Left ventricle myocardium superior (tissue), 1 donor: ENCODE measurements at regions of chr1 and their contacts with region 1.

Region 1: GRCh38 chr1:51044834-51045233 is 57.2 kb upstream of the C1orf185 start:
- DNase-seq: no peak
- ATAC-seq: no peak

Region 2: DNA sequence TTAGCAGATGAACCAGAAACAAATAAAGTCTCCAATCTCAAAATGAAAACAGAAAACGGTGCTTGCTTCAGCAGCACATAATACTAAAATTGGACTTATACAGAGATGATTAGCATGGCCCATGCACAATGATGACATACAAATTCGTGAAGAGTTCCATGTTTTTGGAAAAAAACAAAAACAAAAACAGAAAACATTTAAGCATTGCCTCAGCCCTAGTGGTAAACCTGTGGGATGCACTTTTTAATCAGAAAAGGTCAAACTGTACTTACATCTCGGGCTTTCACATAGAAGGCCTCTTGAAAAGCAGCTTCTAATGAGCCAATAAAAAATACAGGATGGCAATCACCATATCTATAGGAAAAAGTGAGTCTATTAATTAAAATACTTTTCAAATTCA is 462.5 kb before region 1 on chr1:
- intact Hi-C with region 1: no loop called
- DNase-seq: no peak
- ATAC-seq: no peak

Region 3: GRCh38 chr1:50774759-50775351 is 270.0 kb before region 1 on chr1:
- intact Hi-C with region 1: loop called (anchors 10 kb)
- DNase-seq: no peak
- ATAC-seq: no peak

Region 4: DNA sequence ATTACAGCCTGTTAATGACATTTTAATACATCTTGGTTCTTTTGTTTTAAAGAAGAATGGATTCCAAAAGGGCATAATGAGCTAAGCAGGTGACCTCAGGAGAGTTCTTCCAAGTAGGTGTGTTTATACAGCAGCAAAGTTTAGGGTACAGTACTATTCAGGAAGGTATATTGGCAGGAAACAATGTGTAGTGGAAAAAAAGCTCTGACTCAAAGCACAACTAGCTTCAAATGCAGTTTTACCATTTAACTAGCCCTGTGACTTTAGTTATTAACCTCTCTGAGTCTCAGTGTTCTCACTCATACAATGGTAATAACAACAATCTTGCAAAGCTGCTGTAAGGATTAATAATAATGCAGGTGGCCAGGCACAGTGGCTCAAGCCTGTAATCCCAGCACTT is 114.6 kb before region 1 on chr1:
- intact Hi-C with region 1: loop called (anchors 10 kb)
- DNase-seq: no peak
- ATAC-seq: no peak